ENCODE measurements at regions of chr15 and their contacts with region 1.

Region 1: DNA sequence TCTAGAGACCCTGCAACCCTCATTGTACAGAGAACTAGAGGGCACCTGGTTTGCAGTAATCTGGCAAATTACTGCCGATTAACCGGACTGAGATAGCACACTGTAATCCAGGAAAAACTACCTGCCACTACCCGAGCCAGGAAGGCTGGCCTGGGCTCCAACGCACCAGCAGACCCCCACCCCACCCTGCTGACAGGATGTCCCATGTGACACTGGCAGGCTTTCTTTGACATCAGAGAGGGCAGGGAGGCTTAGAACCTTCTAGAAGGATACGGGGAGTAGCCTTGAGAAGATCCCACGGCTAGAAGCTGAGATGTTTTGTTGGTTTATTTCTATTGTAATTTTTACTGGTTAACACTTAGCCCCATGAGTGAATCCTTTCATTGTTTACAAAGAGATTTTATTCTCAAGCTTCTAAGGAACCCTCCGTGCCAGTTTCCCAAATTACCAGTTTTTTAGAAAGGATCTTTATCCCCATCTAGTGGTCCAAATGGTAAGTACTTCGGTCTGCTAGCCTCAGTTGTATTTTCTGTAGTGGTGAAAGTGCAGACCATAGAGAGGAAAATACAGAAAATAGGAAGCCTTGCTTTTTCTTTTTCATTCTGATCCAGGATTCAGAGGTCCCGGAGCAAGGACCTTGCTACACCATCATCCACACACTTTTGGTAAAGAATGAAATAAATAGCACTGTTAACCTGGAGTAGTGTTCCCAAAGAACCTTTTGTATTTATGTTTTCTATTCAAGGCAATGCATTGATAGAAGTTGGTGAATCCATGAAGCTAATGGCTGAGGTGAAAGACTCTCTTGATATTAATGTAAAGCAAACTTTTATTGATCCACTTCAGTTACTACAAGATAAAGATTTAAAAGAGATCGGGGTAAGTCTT is 81.9 kb upstream of the ADAMTSL3 start:
- DNase-seq: no peak
- ATAC-seq: no peak
- H3K4me3 ChIP-seq: no peak overlapping the region
- H3K27ac ChIP-seq: no peak overlapping the region
- H3K4me1 ChIP-seq: no peaks in the 10 kb centered on the region
- H3K27me3 ChIP-seq: peaks cover 0 to 4% (median 0%) of the 10 kb centered on the region in 7 donors
- CTCF ChIP-seq: peak; percentile 32 to 68 (median 61)

Region 2: GRCh38 chr15:82306791-82307713 is 1265.0 kb before region 1 on chr15:
- intact Hi-C with region 1: no loop called
- DNase-seq: no peak
- ATAC-seq: no peak
- H3K4me3 ChIP-seq: no peak overlapping the region
- H3K27ac ChIP-seq: no peak overlapping the region
- H3K4me1 ChIP-seq: no peaks in the 10 kb centered on the region
- H3K27me3 ChIP-seq: no peaks in the 10 kb centered on the region
- CTCF ChIP-seq: no peak

Region 3: GRCh38 chr15:83734487-83734886 is 162.4 kb after region 1 on chr15:
- intact Hi-C with region 1: loop called in 1 of 10 experiments (anchors 10 kb)
- DNase-seq: no peak
- ATAC-seq: peak in 1 of 8 donors; percentile 62
- H3K4me3 ChIP-seq: no peak overlapping the region
- H3K27ac ChIP-seq: no peak overlapping the region
- H3K4me1 ChIP-seq: peaks cover 0 to 3% (median 0%) of the 10 kb centered on the region in 9 donors
- H3K27me3 ChIP-seq: no peaks in the 10 kb centered on the region
- CTCF ChIP-seq: peak in 6 of 9 donors; percentile 29 to 55 (median 40)

Region 4: DNA sequence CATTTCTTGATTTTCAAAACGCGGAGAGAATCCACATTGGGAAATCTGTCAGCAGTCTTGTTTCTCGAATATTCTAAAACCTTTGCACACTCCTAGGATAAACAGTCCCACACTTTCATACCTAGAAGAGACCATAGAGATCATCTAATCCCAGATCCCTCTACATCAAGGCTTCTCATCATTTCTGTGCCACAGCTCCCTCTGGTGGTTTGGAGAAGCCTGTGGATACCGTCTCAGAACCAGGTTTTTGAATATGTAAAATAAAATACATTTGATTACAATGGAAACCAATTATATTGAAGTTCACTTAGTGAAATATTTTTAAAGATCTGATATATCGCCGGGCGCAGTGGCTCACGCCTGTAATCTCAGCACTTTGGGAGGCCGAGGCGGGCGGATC is 451.6 kb after region 1 on chr15:
- intact Hi-C with region 1: loop called in 2 of 10 experiments (anchors 5 kb)
- DNase-seq: peak in 1 of 2 donors; percentile 24
- ATAC-seq: peak in 1 of 8 donors; percentile 52
- H3K4me3 ChIP-seq: no peak overlapping the region
- H3K27ac ChIP-seq: no peak overlapping the region
- H3K4me1 ChIP-seq: no peaks in the 10 kb centered on the region
- H3K27me3 ChIP-seq: no peaks in the 10 kb centered on the region
- CTCF ChIP-seq: peak; percentile 34 to 69 (median 61)